Activated CD8-positive, alpha-beta T cell treated with anti-CD3 and anti-CD28 coated beads, Interleukin-2, amount 10 ng/mL, durations not matched to agents 7 days and 5 days (primary cell): ENCODE measurements at regions of chr1 and their contacts with region 1.

Region 1: GRCh38 chr1:26284597-26285360 is 4.9 kb downstream of the SH3BGRL3 start:
- DNase-seq: peak; percentile 97
- ATAC-seq: peak; percentile 74
- H3K4me3 Mint-ChIP-seq: peak overlapping the region; percentile 89
- H3K27ac Mint-ChIP-seq: peak overlapping the region; percentile 96
- H3K4me1 Mint-ChIP-seq: peaks cover 89% of the 10 kb centered on the region
- H3K27me3 Mint-ChIP-seq: no peaks in the 10 kb centered on the region

Region 2: DNA sequence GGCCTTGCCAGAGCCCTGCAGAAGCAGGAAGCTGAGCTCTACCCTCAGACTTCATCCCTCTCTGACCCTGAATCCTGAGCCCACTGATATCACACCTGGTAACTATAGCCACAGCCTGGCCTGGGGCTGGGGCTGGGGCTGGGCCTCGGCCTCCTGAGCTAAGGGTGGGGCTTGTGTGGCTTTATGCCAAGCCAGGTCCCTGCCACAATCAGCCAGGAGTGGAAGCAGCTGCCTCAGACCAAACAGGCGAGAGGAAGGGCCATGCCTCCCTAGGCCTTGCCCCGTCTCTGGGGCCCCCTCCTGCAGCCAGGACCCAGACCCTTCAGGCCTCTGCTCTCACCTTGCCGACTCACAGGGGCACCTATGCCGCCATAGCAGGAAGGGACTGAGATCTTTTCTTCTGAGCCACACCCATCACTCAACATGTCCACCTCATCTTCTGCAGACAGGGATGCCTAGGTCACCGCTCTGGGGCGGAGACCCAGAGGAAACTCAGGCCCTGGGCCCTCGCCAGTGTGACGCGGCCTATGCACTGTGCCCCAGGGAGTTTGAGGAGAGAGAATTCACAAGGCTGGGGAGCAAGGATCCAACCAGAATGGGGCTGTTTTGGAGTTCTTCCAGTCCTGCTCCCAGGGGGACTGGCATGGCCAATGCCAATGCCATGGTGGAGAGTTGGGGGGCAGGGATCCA is 16.0 kb after region 1 on chr1:
- CTCF ChIA-PET with region 1: interaction called, 159 read pairs
- POLR2A ChIA-PET with region 1: interaction called, 79 read pairs
- DNase-seq: no peak
- ATAC-seq: no peak
- H3K4me3 Mint-ChIP-seq: no peak overlapping the region
- H3K27ac Mint-ChIP-seq: peak overlapping the region; percentile 63
- H3K4me1 Mint-ChIP-seq: peaks cover 32% of the 10 kb centered on the region
- H3K27me3 Mint-ChIP-seq: no peaks in the 10 kb centered on the region

Region 3: DNA sequence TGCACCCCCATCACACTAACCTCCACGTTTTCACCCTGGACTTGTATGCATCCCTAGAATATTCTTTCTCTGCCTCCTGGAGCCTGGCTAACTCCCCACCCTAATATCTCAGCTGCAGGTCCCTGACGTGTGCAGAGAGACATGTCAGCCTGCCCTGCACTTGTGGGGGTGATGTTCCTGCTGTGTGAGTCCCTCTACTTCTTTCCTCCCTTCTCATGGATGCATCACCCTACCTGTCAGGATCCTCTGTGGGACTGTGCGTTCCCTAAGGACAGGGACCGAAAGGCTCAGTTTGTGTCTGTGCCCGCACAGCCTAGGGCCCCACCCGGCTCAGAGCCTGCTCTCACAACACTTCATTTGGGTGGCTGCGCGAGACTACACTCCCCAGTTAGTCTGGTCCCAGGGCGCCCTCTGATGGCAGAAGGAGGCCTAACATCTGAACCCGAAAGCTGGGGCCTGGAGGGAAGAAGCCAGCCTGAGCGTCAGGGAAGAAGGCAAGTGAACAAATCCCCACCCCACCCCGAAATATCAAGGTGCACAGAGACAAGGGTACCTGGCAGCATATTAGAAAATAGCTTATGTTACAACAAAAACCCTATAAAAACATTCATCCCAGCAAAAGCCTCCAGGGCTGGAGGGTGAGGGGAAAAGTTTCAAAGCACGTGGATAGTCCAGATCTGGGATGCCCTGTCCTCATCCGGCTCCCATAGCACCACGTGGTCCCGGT is 36.7 kb after region 1 on chr1:
- CTCF ChIA-PET with region 1: interaction called, 591 read pairs
- POLR2A ChIA-PET with region 1: interaction called, 409 read pairs
- DNase-seq: peak; percentile 97
- ATAC-seq: peak; percentile 76
- H3K4me3 Mint-ChIP-seq: peak overlapping the region; percentile 84
- H3K27ac Mint-ChIP-seq: peak overlapping the region; percentile 94
- H3K4me1 Mint-ChIP-seq: peaks cover 49% of the 10 kb centered on the region
- H3K27me3 Mint-ChIP-seq: no peaks in the 10 kb centered on the region

Region 4: DNA sequence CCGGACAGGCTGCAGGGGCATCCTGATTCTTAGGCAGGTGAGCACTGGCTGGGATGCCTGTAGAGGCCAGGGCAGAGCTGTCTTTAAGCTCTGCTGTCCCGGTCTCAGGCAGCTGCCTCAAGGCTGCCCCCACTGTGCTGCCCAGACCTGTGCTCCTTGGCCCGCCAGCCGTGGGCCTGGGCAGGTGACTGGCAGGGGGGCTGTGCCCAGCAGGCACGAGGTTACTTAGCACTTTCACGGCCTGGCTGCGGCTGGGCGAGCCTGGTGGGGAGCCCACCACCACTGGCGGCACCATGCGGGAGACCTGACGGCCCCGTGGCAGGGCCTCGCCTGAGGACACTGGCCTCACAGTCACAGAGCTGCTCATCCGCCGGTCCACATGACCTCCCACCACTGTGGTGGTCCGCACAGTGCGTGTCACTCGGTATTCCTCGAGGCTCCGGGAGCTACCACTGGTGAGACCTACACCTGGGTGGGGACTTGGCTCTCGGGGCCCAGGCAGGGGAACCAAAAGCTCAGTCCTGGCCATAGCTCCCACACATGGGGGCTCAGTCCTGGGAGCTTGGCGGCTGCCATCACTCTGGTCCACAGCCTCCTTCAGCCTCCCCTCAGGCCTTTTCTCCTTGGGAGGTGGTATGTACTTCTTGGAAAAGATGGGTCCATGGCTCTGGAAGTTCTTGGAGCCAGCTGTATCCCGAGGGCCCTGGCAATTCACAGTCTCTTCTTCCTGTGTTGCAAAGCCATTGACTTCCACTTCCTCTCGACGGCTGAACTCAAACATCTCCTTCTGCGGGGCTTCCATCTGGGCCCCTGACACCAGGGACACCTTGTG is 61.2 kb after region 1 on chr1:
- CTCF ChIA-PET with region 1: interaction called, 12 read pairs
- POLR2A ChIA-PET with region 1: no interaction called
- DNase-seq: no peak
- ATAC-seq: no peak
- H3K4me3 Mint-ChIP-seq: no peak overlapping the region
- H3K27ac Mint-ChIP-seq: no peak overlapping the region
- H3K4me1 Mint-ChIP-seq: peaks cover 3% of the 10 kb centered on the region
- H3K27me3 Mint-ChIP-seq: peaks cover 5% of the 10 kb centered on the region

Region 5: DNA sequence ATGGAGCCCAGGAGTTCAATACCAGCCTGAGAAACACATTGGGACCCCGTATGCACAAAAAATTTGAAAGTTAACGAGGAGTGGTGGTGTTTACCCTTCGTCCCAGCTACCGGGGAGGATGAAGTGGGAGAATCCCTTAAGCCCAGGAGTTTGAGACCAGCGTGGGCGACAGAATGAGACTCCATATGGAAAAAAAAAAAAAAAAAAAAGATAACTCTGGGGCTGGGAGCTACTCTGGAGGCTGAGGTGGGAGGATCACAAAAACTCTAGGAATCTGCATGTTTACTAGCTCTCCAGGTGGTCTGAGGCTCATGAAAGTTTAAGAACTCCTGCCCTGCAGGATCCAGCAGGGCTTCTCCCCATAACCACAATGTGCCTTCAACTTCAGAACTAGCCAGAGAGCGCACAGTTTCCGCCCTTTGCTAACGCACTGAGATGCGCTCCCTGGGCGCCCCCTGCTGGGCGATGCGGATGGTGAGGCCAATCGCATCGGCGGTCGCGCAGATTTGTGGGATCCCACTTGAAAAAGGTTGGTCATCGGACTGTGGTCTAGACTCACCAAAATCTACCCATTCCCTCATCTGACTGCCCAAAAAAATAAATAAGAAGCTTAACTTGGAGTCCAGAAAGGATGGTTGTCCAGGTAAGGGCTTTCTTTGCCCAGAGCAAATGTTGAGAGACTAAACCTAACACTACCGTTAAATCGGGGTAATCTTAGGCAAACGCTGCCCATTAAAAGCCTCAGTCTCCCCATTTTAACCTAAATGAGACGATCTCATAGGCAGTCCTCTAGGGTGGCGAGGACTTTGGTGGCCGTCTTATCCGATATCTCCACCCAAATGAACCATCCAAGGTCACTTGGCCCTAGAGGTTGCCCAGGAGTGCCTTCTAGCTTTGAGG is 79.0 kb after region 1 on chr1:
- CTCF ChIA-PET with region 1: interaction called, 58 read pairs
- POLR2A ChIA-PET with region 1: interaction called, 4 read pairs
- DNase-seq: peak; percentile 93
- ATAC-seq: peak; percentile 76
- H3K4me3 Mint-ChIP-seq: peak overlapping the region; percentile 58
- H3K27ac Mint-ChIP-seq: peak overlapping the region; percentile 70
- H3K4me1 Mint-ChIP-seq: peaks cover 78% of the 10 kb centered on the region
- H3K27me3 Mint-ChIP-seq: peaks cover 11% of the 10 kb centered on the region

Region 6: DNA sequence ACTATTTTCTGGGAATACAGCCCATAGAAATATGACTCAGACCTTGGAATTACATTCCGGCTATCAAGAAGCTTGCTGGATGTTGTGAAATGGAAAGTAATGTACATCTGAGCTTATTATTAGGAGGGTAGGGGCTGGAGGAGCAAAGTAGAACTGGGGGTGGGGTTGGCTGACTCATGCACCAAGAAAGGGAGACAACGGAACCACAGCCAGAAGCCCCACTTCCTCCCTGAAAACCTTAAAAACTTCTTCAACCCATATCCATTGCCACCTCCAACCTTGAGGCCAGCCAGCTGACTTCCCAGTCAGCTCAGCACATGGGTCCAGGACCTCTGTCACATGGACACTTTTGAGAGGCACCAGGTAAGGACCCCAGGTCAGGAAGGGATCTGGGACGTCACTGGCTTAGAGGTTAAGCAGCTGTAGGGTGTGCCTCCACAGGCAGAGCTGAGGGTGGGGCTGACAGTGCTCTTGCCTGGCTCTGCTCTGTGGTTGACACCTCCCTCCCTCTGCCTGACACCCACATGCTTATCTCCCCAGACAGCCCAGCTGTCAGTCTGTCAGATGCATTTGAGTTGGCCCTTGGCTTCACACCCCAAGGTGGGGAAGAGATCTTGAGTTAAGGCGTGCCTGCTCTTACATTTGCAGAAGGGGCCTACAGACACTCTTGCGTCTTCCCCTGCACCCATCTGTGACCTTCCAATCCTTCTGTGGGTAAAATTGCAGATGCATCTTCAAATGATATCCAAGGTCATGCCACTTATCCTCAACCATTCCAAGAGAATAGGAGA is 93.5 kb after region 1 on chr1:
- CTCF ChIA-PET with region 1: interaction called, 33 read pairs
- POLR2A ChIA-PET with region 1: interaction called, 7 read pairs
- DNase-seq: peak; percentile 93
- ATAC-seq: peak; percentile 95
- H3K4me3 Mint-ChIP-seq: peak overlapping the region; percentile 58
- H3K27ac Mint-ChIP-seq: peak overlapping the region; percentile 97
- H3K4me1 Mint-ChIP-seq: peaks cover 81% of the 10 kb centered on the region
- H3K27me3 Mint-ChIP-seq: no peaks in the 10 kb centered on the region

Region 7: GRCh38 chr1:26417111-26417759 is 132.5 kb after region 1 on chr1:
- CTCF ChIA-PET with region 1: interaction called, 38 read pairs
- POLR2A ChIA-PET with region 1: no interaction called
- DNase-seq: peak; percentile 91
- ATAC-seq: peak; percentile 100
- H3K4me3 Mint-ChIP-seq: no peak overlapping the region
- H3K27ac Mint-ChIP-seq: no peak overlapping the region
- H3K4me1 Mint-ChIP-seq: peaks cover 7% of the 10 kb centered on the region
- H3K27me3 Mint-ChIP-seq: peaks cover 49% of the 10 kb centered on the region